ENCODE measurements at regions of chr2 and their contacts with region 1.

Region 1: GRCh38 chr2:47782671-47783485 is at the start of gene MSH6:
- DNase-seq: peak; percentile 75 to 97 (median 86)
- ATAC-seq: peak; percentile 93
- H3K4me3 ChIP-seq: peak within 1 kb of the TSS; percentile 78
- H3K4me3 Mint-ChIP-seq: peak within 1 kb of the TSS; percentile 95
- H3K27ac ChIP-seq: peak within 1 kb of the TSS; percentile 64 to 84
- H3K27ac Mint-ChIP-seq: peak within 1 kb of the TSS; percentile 86
- H3K4me1 ChIP-seq: peaks cover 39% of the 10 kb centered on the region
- H3K4me1 Mint-ChIP-seq: peaks cover 29% of the 10 kb centered on the region
- H3K27me3 ChIP-seq: no peaks in the 10 kb centered on the region
- H3K27me3 Mint-ChIP-seq: no peaks in the 10 kb centered on the region
- CTCF ChIP-seq: no peak
- total RNA-seq, gene MSH6: 37.3 to 38.5 TPM

Region 2: GRCh38 chr2:45938649-45939511 is 1844.0 kb before region 1 on chr2:
- CTCF ChIA-PET with region 1: no interaction called
- POLR2A ChIA-PET with region 1: no interaction called
- intact Hi-C with region 1: no loop called
- DNase-seq: no peak
- ATAC-seq: no peak
- H3K4me3 ChIP-seq: no peak overlapping the region
- H3K4me3 Mint-ChIP-seq: no peak overlapping the region
- H3K27ac ChIP-seq: no peak overlapping the region
- H3K27ac Mint-ChIP-seq: no peak overlapping the region
- H3K4me1 ChIP-seq: peaks cover 4% of the 10 kb centered on the region
- H3K4me1 Mint-ChIP-seq: no peaks in the 10 kb centered on the region
- H3K27me3 ChIP-seq: no peaks in the 10 kb centered on the region
- H3K27me3 Mint-ChIP-seq: no peaks in the 10 kb centered on the region
- CTCF ChIP-seq: no peak

Region 3: GRCh38 chr2:46915811-46916630 is 866.9 kb before region 1 on chr2:
- CTCF ChIA-PET with region 1: no interaction called
- POLR2A ChIA-PET with region 1: no interaction called
- intact Hi-C with region 1: loop called in 1 of 2 experiments (anchors 5 kb)
- DNase-seq: peak; percentile 54 to 92 (median 74)
- ATAC-seq: peak; percentile 85
- H3K4me3 ChIP-seq: peak overlapping the region; percentile 80
- H3K4me3 Mint-ChIP-seq: peak overlapping the region; percentile 82
- H3K27ac ChIP-seq: peak overlapping the region; percentile 74 to 87
- H3K27ac Mint-ChIP-seq: peak overlapping the region; percentile 86
- H3K4me1 ChIP-seq: peaks cover 41% of the 10 kb centered on the region
- H3K4me1 Mint-ChIP-seq: peaks cover 65% of the 10 kb centered on the region
- H3K27me3 ChIP-seq: no peaks in the 10 kb centered on the region
- H3K27me3 Mint-ChIP-seq: no peaks in the 10 kb centered on the region
- CTCF ChIP-seq: no peak

Region 4: GRCh38 chr2:47402805-47403608 is 379.9 kb before region 1 on chr2 and contains the start of gene MSH2:
- CTCF ChIA-PET with region 1: no interaction called
- POLR2A ChIA-PET with region 1: interaction called, 7 read pairs
- intact Hi-C with region 1: loop called in 1 of 2 experiments (anchors 2 kb)
- DNase-seq: peak; percentile 78 to 96 (median 88)
- ATAC-seq: peak; percentile 91
- H3K4me3 ChIP-seq: peak within 1 kb of the TSS; percentile 92
- H3K4me3 Mint-ChIP-seq: peak within 1 kb of the TSS; percentile 99
- H3K27ac ChIP-seq: peak within 1 kb of the TSS in 1 of 2 donors; percentile 74
- H3K27ac Mint-ChIP-seq: peak within 1 kb of the TSS; percentile 93
- H3K4me1 ChIP-seq: peaks cover 23% of the 10 kb centered on the region
- H3K4me1 Mint-ChIP-seq: peaks cover 43% of the 10 kb centered on the region
- H3K27me3 ChIP-seq: no peaks in the 10 kb centered on the region
- H3K27me3 Mint-ChIP-seq: no peaks in the 10 kb centered on the region
- CTCF ChIP-seq: no peak
- total RNA-seq, gene MSH2: 7.1 to 8.2 TPM

Region 5: GRCh38 chr2:47512581-47513083 is 270.2 kb before region 1 on chr2:
- CTCF ChIA-PET with region 1: no interaction called
- POLR2A ChIA-PET with region 1: no interaction called
- intact Hi-C with region 1: no loop called
- DNase-seq: no peak
- ATAC-seq: no peak
- H3K4me3 ChIP-seq: no peak overlapping the region
- H3K4me3 Mint-ChIP-seq: no peak overlapping the region
- H3K27ac ChIP-seq: no peak overlapping the region
- H3K27ac Mint-ChIP-seq: no peak overlapping the region
- H3K4me1 ChIP-seq: no peaks in the 10 kb centered on the region
- H3K4me1 Mint-ChIP-seq: no peaks in the 10 kb centered on the region
- H3K27me3 ChIP-seq: no peaks in the 10 kb centered on the region
- H3K27me3 Mint-ChIP-seq: no peaks in the 10 kb centered on the region
- CTCF ChIP-seq: no peak

Region 6: DNA sequence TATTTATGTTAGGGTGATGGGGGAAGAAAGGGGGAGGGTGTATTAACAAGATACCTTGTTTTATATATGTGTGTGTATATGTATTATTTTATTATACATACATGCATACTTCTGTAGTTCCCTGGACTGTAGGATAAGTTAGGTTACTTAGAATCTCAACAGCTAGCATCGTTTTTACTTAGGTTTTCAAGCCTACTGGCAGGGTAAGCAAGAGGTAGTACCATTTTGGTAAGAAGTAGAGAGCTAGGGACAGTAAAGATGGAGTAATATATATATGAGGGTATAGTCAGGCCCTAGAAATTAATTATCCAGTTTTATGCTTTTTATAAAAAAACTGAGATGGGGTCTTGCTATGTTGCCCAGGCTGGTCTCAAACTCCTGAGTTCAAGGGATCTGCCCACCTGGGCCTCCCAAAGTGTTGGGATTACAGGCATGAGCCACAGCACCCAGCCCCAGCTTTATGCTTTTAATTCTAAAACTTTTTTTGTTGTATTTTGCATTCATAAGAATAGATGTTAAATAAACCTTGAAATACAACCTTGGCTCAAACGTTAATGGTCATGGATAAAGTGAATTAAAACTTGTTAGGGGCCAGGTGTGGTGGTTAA is 13.3 kb after region 1 on chr2:
- CTCF ChIA-PET with region 1: no interaction called
- POLR2A ChIA-PET with region 1: interaction called, 11 read pairs
- intact Hi-C with region 1: no loop called
- DNase-seq: no peak
- ATAC-seq: no peak
- H3K4me3 ChIP-seq: no peak overlapping the region
- H3K4me3 Mint-ChIP-seq: no peak overlapping the region
- H3K27ac ChIP-seq: no peak overlapping the region
- H3K27ac Mint-ChIP-seq: no peak overlapping the region
- H3K4me1 ChIP-seq: no peaks in the 10 kb centered on the region
- H3K4me1 Mint-ChIP-seq: peaks cover 7% of the 10 kb centered on the region
- H3K27me3 ChIP-seq: no peaks in the 10 kb centered on the region
- H3K27me3 Mint-ChIP-seq: no peaks in the 10 kb centered on the region
- CTCF ChIP-seq: no peak

Region 7: GRCh38 chr2:47897883-47898731 is 115.2 kb after region 1 on chr2:
- CTCF ChIA-PET with region 1: interaction called, 3 read pairs
- POLR2A ChIA-PET with region 1: interaction called, 4 read pairs
- intact Hi-C with region 1: loop called in 1 of 2 experiments (anchors 5 kb)
- DNase-seq: no peak
- ATAC-seq: no peak
- H3K4me3 ChIP-seq: no peak overlapping the region
- H3K4me3 Mint-ChIP-seq: peak overlapping the region; percentile 54
- H3K27ac ChIP-seq: no peak overlapping the region
- H3K27ac Mint-ChIP-seq: peak overlapping the region; percentile 22
- H3K4me1 ChIP-seq: peaks cover 17% of the 10 kb centered on the region
- H3K4me1 Mint-ChIP-seq: peaks cover 80% of the 10 kb centered on the region
- H3K27me3 ChIP-seq: no peaks in the 10 kb centered on the region
- H3K27me3 Mint-ChIP-seq: no peaks in the 10 kb centered on the region
- CTCF ChIP-seq: no peak

Measured in CD4-positive, alpha-beta T cell (primary cell).